ENCODE measurements at regions of chr20 and their contacts with region 1.

Region 1: GRCh38 chr20:40689943-40690835 is 1.2 kb upstream of the MAFB start:
- DNase-seq: peak; percentile 95 to 98
- ATAC-seq: peak; percentile 89
- H3K4me3 ChIP-seq: peak overlapping the region in 1 of 2 donors; percentile 10
- H3K27ac ChIP-seq: peak overlapping the region; percentile 62 to 85
- H3K4me1 ChIP-seq: no peaks in the 10 kb centered on the region
- H3K27me3 ChIP-seq: no peaks in the 10 kb centered on the region

Region 2: DNA sequence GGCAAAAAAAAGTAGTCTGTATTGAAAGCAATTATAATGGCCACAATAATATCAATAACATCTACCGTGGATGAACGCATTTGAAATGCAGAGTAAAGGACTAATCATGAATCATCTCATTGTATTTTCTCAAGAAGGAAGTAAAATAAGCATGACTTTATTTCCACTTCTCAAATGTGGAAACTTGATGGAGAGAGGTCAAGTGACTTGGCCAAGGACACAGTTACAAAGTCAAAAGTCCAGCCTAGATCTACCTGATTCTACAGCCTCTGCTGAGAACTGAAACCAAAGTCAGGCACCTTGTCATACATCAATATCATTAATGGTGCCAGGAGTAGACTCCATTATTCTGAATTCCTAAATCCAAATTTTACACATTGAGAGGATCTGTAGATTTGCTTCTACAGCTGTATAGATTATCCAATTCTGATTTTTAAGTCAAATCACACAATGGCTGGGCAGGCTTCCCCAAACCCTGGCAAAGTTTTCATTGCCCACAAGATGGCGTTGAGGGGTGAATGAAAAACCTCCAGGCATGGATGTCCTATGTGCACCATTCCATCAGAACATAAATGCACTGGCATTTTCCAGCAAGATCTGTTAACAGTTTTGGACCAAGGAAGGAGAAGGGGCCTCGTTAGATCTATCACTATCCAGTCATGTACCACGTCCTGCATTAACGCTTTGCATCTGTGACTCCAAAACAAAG is 424.2 kb before region 1 on chr20:
- intact Hi-C with region 1: loop called (anchors 2 to 5 kb)
- DNase-seq: no peak
- ATAC-seq: peak; percentile 46
- H3K4me3 ChIP-seq: no peak overlapping the region
- H3K27ac ChIP-seq: no peak overlapping the region
- H3K4me1 ChIP-seq: no peaks in the 10 kb centered on the region
- H3K27me3 ChIP-seq: no peaks in the 10 kb centered on the region

Region 3: GRCh38 chr20:40293740-40294139 is 396.4 kb before region 1 on chr20:
- intact Hi-C with region 1: loop called (anchors 2 to 10 kb)
- DNase-seq: peak in 1 of 2 donors; percentile 45
- ATAC-seq: peak; percentile 85
- H3K4me3 ChIP-seq: no peak overlapping the region
- H3K27ac ChIP-seq: peak overlapping the region; percentile 1 to 82
- H3K4me1 ChIP-seq: peaks cover 3 to 10% of the 10 kb centered on the region in 2 donors
- H3K27me3 ChIP-seq: no peaks in the 10 kb centered on the region

Region 4: DNA sequence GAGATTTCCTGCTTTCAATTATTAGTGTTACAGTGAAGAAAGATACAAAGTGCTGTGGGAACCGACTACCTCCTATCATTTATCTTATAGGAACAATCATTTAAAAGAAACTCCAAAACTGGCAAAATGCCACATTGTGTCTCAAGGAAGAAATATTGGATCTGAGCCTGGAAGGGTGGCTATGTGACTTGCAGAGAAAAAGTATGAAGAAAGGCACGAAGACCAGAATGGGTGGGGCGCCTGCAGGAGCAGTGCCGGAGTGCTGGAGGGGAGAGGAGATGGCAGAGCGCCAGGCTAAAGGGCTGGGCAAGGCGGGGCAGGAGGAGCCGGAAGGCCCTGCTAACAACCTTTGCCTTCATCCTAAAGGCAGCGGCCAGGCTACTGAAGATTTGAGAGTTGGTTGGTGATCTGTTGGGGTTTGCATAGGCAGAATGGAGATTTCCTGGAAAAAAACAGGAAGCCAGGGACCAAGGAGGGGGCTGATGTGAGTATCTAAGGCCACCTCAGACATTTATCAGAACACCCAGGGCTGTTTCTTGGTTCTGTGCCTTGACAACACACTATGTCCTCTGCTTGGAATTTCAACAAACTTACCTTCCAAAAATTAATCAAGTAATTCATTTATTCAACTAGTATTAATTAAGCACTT is 126.8 kb before region 1 on chr20:
- intact Hi-C with region 1: loop called in 1 of 2 experiments (anchors 2 kb)
- DNase-seq: peak in 1 of 2 donors; percentile 79
- ATAC-seq: no peak
- H3K4me3 ChIP-seq: no peak overlapping the region
- H3K27ac ChIP-seq: no peak overlapping the region
- H3K4me1 ChIP-seq: no peaks in the 10 kb centered on the region
- H3K27me3 ChIP-seq: no peaks in the 10 kb centered on the region